ENCODE measurements at regions of chr5 and their contacts with region 1.

Region 1: DNA sequence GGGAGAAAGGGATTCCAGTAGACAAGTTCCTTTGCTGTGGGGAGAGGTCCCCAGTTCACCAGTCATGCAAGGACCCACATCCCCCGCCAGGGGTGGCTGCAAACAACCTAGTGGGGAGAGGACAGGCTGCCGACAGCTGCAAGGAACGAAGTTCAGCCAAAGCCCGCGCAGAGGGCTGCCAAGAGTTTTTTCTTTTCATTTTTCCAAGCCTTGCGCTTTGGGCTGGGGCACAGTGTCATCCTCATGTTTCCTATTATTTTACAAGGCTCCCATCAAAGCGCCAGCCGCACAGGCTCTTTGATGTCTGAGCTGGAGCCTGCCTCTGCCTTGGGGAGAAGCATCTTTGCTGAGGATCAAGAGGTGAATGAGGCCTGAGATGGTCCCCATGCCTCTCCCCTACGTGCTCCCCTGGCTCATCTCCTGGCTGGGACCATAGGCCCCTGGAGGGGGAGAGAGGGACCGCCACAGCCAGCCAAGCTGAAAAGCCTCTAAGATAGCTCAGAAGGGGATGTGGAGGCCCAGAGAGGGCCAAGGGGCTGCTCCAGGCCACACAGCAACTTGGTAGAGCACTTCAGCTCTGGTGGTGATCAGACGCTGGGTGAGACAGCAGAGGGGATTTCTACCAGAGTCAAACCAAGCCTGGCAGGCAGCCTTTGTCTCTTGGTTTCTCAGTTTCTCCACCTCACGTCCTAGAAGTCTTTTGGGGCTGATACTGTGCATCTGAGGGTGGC is 50.4 kb upstream of the SYNPO start:
- DNase-seq: peak; percentile 77 to 84 (median 84)
- ATAC-seq: peak; percentile 72 to 88 (median 76)
- H3K4me3 ChIP-seq: no peak overlapping the region
- H3K27ac ChIP-seq: peak overlapping the region in 10 of 12 donors; percentile 52 to 83 (median 74)
- H3K4me1 ChIP-seq: peaks cover 8 to 63% (median 55%) of the 10 kb centered on the region in 12 donors
- H3K27me3 ChIP-seq: no peaks in the 10 kb centered on the region
- CTCF ChIP-seq: peak; percentile 64 to 90 (median 80)
- POLR2A ChIP-seq: no peak

Region 2: DNA sequence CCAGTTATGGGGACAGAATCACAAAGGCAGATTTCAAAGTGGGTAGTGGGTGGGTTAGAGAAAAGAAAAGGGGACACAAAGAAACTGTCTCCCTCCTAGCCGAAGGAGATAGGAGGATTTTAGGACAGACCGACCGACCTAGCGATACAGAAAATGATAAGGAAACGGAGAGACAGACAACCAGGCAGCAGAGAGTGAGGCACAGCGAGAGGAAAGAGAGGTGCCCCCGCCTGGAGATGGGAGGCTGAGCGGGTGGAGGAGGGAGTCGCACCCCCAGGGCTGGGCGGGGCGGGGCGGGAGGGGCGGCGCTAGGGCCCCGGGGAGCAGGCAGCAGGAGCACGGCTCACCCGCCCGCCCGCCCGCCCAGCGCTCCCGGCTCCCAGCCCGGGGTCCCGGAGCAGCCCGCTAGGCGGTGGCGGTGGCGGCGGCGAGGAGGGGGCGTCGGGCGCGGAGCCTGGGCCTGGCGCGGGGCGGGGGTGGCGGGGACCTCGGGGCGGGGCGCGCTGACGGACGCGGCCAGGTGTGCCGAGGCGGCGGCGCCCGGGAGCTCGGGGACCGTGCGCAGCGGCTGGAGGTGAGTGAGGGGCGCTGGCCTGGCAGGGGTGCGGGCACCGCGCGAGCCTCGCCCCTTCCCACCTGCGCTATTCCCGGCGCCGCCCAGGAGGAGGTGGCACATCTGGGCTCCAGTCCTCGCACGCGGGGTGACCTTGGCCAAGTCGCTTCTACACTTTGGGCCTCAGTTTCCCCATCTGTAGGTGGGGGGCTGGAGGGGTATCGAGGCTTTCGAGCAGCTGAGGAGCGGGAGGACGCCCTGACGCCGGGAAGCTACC is 34.5 kb after region 1 on chr5:
- intact Hi-C with region 1: loop called in 2 of 10 experiments (anchors 2 to 5 kb)
- DNase-seq: peak in 4 of 5 donors; percentile 64 to 73 (median 68)
- ATAC-seq: peak in 3 of 4 donors; percentile 31 to 36 (median 34)
- H3K4me3 ChIP-seq: peak overlapping the region; percentile 52 to 99 (median 92)
- H3K27ac ChIP-seq: peak overlapping the region; percentile 93 to 100 (median 99)
- H3K4me1 ChIP-seq: peaks cover 12 to 90% (median 75%) of the 10 kb centered on the region in 12 donors
- H3K27me3 ChIP-seq: peaks cover 0 to 10% (median 0%) of the 10 kb centered on the region in 9 donors
- CTCF ChIP-seq: peak in 5 of 12 donors; percentile 11 to 48 (median 15)
- POLR2A ChIP-seq: no peak

Region 3: DNA sequence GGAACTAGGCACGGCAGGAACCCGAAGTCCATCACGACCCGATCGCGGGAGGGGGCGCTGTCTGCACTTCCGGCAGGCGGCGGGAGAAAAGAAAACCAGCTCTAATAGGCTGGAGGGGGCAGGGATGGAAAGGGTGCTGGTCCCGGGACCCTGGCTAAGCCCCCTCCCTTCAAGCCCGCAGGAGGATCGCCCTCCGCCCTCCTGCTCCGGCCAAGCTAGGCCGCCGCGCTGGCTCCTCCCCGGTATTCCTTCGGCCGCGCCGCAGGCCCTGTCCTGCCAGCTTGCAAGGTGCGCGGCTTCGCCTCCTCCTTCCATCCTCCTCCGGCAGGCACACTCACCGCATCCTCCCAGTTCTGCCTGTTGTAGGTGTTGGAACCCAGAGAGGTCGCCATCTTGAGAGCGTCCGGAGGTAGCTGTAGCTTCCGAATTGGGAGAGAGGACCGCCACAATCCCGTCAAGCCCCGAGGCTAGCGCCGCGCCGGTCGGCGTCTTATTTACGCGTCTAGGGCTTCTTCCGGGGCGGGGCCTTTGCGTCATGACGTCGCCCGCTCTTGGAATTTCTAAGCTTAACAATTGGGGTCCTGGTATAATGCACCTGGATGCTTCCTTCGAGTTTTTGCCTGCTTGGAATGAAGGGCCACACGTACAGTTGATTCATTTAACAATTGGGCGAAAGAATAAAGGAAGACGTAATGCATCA is 110.7 kb after region 1 on chr5 and contains the start of gene RBM22:
- intact Hi-C with region 1: loop called in 1 of 10 experiments (anchors 2 kb)
- DNase-seq: peak; percentile 93 to 97 (median 95)
- ATAC-seq: peak; percentile 97 to 100 (median 99)
- H3K4me3 ChIP-seq: peak within 1 kb of the TSS; percentile 73 to 99 (median 94)
- H3K27ac ChIP-seq: peak within 1 kb of the TSS; percentile 92 to 99 (median 98)
- H3K4me1 ChIP-seq: peaks cover 0 to 24% (median 16%) of the 10 kb centered on the region in 12 donors
- H3K27me3 ChIP-seq: no peaks in the 10 kb centered on the region
- CTCF ChIP-seq: peak; percentile 43 to 81 (median 62)
- POLR2A ChIP-seq: peak in 1 of 2 donors; percentile 87
- total RNA-seq, gene RBM22: 23.5 to 42.3 (median 28.0) TPM

Measured in heart left ventricle (tissue), 16 donors.